ENCODE measurements at regions of chr3 and their contacts with region 1.

Region 1: DNA sequence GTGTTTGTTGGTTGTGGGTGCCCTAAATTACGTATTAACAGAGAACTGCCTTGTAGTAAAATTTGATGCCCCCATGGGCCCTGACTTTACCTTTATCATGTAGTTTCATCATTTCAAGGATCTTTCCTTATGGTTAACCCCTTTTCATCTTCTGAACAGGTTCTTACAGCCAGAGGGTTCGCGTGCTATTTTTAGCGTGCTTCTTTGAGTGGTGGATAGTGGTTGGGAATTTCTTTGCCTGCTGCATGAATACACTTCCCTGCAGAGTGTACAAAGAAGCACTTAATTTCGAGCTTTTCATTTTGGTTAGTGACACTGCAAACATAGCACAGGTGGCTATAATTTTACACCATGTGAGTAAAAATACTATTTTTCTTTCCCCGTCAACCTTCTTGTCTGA is 231.8 kb downstream of the ROBO2 start:
- DNase-seq: no peak
- H3K4me3 ChIP-seq: no peak overlapping the region
- H3K27ac ChIP-seq: no peak overlapping the region
- H3K4me1 ChIP-seq: no peaks in the 10 kb centered on the region
- H3K27me3 ChIP-seq: no peaks in the 10 kb centered on the region
- CTCF ChIP-seq: no peak
- EP300 ChIP-seq: no peak
- POLR2A ChIP-seq: no peak

Region 2: DNA sequence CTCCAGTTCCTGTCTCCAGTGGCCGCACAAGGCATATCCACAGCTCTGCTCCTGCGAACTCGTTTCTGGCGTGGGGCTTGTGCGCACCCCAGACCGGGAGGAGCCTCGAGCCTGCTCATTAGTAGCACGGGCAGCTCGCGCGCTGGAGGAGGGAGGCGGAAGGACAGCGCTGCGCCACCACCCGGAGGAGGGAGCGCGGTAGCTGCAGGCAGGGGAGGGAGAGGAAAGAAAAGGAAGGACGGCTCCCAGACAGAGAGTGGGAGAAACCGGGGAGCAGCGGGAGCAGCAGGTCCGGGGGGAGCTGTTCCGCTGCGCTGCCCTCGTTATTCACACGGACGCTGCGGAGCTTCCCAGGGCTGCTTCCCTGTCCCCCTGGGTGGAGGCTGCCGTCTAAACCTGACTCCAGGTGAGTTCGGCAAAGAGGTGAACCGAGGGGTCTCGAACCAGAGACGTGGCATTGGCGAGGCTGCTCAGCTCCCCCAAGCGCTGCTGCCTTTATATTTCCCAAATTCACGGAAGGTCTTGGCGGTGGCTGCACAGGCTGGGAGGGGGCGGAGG is 1365.1 kb before region 1 on chr3:
- in situ Hi-C with region 1: no loop called
- intact Hi-C with region 1: no loop called
- DNase-seq: no peak
- H3K4me3 ChIP-seq: no peak overlapping the region
- H3K27ac ChIP-seq: no peak overlapping the region
- H3K4me1 ChIP-seq: no peaks in the 10 kb centered on the region
- H3K27me3 ChIP-seq: peaks cover 4% of the 10 kb centered on the region
- CTCF ChIP-seq: no peak
- EP300 ChIP-seq: no peak
- POLR2A ChIP-seq: no peak

Region 3: DNA sequence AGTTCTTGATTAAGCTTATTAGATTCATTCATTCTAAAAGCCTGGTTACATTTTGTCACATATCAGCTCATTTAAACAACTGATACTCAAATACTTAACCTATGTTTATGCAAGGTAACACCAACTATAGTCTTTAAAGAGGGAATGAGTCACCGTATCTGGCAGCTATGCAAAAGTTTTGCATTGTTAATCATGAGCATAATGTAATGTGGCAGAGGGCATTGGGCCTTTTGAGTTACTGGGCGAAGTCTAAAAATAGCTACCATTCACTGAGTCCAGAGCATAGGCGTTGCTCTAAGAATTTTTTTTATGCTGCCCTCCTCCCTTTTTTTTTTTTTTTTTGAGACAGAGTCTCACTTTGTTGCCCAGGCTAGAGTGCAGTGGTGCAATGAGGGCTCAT is 1208.7 kb before region 1 on chr3:
- in situ Hi-C with region 1: no loop called
- intact Hi-C with region 1: no loop called
- DNase-seq: no peak
- H3K4me3 ChIP-seq: no peak overlapping the region
- H3K27ac ChIP-seq: no peak overlapping the region
- H3K4me1 ChIP-seq: no peaks in the 10 kb centered on the region
- H3K27me3 ChIP-seq: no peaks in the 10 kb centered on the region
- CTCF ChIP-seq: no peak
- EP300 ChIP-seq: no peak
- POLR2A ChIP-seq: no peak

Region 4: DNA sequence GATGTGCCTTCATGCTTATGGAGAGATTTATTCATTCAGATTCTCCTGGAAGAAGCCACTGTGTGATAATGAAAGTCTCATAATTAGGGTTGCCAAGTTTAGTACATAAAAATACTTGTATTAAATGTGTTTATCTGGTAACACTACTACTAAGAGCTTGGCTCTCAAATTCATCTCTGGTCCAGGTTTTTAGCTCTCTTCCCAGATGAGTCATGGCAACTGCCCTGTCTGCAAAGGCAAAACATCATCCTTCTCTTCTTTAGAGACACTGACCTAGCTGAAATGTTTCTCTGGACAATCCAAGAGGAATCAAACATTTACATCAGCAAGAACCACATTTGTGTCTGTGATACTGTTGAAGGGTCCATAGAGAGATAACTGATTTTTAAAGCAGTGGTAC is 37.7 kb after region 1 on chr3:
- in situ Hi-C with region 1: no loop called
- intact Hi-C with region 1: no loop called
- DNase-seq: no peak
- H3K4me3 ChIP-seq: no peak overlapping the region
- H3K27ac ChIP-seq: no peak overlapping the region
- H3K4me1 ChIP-seq: no peaks in the 10 kb centered on the region
- H3K27me3 ChIP-seq: no peaks in the 10 kb centered on the region
- CTCF ChIP-seq: no peak
- EP300 ChIP-seq: no peak
- POLR2A ChIP-seq: no peak

Region 5: GRCh38 chr3:77513542-77513941 is 241.8 kb after region 1 on chr3:
- in situ Hi-C with region 1: no loop called
- intact Hi-C with region 1: no loop called
- DNase-seq: no peak
- H3K4me3 ChIP-seq: no peak overlapping the region
- H3K27ac ChIP-seq: no peak overlapping the region
- H3K4me1 ChIP-seq: no peaks in the 10 kb centered on the region
- H3K27me3 ChIP-seq: no peaks in the 10 kb centered on the region
- CTCF ChIP-seq: no peak
- EP300 ChIP-seq: no peak
- POLR2A ChIP-seq: no peak

Region 6: DNA sequence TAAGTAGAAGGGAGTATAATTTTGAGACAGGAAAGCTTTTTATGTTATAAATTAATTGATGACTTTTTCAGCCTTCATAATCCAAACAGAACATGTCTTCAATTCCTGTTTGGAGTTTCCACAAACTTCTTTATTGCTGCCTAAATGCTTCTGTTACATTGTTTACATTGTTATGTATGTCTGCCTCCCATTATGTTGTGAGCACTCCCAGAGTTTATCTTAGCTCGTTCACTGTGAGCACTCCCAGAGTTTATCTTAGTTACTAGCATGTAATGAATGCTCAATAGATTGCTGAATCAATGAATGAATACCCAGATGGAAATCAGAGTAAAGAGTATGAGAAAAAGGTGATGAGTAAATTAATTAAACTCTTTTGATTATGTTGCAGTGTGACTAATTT is 1318.1 kb after region 1 on chr3:
- in situ Hi-C with region 1: no loop called
- intact Hi-C with region 1: loop called (anchors 10 kb)
- DNase-seq: no peak
- H3K4me3 ChIP-seq: no peak overlapping the region
- H3K27ac ChIP-seq: no peak overlapping the region
- H3K4me1 ChIP-seq: no peaks in the 10 kb centered on the region
- H3K27me3 ChIP-seq: no peaks in the 10 kb centered on the region
- CTCF ChIP-seq: no peak
- EP300 ChIP-seq: no peak
- POLR2A ChIP-seq: no peak